Lower leg skin (tissue), 4 donors: ENCODE measurements at regions of chr7 and their contacts with region 1.

Region 1: DNA sequence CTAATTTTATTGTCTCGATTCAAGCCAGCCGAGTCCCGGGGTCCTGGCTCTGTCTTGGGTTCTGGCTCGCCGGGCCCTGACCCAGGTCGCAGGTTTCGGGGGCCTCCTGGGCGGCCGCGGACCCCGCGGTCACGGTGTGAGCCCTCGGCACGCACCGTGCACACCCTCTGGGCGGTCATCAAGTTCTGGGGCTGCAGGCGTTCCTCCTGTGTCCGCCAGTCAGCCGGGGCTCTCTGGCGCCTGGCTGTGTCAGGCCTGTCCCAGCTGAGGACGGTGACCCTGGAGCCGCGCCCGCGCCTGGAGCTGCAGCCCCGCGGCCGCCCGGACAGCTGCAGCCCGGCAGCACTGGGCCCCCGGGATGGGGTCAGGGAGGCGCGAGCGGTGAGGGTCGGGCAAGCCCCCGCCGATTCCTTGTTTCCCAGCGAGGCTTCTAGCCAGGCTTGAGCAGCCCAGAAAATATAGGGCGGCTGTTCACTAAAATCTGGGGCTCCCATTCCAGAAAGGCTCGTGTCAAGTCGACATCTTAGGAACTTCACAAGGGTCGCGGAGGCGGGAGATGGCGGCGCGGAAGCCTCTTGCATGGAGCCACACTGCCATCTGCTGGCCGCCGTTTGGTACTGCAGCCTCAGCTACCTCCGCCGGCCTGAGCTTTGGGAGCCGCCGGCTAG is 4.2 kb upstream of the HOXA7 start:
- DNase-seq: peak; percentile 90 to 99
- H3K4me3 ChIP-seq: peak overlapping the region; percentile 44
- CTCF ChIP-seq: peak in 2 of 3 donors; percentile 50 to 99
- POLR2A ChIP-seq: no peak

Region 2: GRCh38 chr7:25851332-25852210 is 1309.1 kb before region 1 on chr7:
- intact Hi-C with region 1: loop called (anchors 5 kb)
- DNase-seq: peak; percentile 86 to 96
- H3K4me3 ChIP-seq: no peak overlapping the region
- CTCF ChIP-seq: peak in 1 of 3 donors; percentile 61
- POLR2A ChIP-seq: no peak

Region 3: GRCh38 chr7:26200444-26201246 is 960.0 kb before region 1 on chr7 and contains the start of gene HNRNPA2B1:
- intact Hi-C with region 1: loop called (anchors 10 kb)
- DNase-seq: peak; percentile 98 to 99
- H3K4me3 ChIP-seq: peak within 1 kb of the TSS; percentile 95
- CTCF ChIP-seq: no peak
- POLR2A ChIP-seq: peak in 1 of 2 donors; percentile 100
- total RNA-seq, gene HNRNPA2B1: 78.1 to 133 (median 99.4) TPM

Region 4: DNA sequence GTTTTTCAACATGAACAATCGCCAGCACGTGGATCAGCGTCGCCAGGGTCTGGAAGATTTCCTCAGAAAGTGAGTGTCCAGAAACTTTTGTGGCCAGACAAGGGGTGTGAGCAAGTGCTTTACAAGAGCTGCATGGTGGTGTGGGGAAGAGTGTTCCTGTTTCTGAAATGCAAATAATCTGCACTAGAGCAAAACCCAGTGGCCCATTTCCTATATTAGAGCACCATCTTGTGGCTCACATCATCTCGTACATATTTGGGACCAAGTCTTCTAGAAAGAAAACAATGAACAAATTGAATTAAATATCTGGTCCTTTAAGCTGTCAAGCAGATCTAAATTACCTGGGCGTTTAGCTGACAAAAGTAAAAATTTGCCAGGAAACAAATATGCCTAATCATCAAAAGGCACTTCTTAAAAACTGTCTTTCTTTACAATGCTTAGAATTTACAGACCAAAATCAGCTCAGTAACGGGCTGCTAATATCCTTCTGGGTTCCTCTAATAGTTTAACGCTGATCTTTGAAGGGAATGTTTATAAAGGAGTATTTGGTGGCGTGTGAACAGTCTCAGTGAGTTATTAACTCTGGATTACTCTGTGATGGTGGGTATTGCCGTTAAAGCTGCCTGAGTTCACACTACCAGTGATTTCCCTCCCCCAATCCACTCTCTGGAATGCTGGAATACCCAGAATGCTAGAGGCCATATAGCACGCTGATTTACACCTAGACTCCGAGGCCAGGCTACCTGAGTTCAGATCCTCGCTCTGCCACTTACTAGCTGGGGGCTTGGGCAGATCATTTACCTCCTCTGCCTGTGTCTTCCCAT is 795.4 kb before region 1 on chr7:
- intact Hi-C with region 1: loop called (anchors 5 kb)
- DNase-seq: peak in 1 of 2 donors; percentile 68
- H3K4me3 ChIP-seq: no peak overlapping the region
- CTCF ChIP-seq: peak in 1 of 3 donors; percentile 51
- POLR2A ChIP-seq: no peak

Region 5: DNA sequence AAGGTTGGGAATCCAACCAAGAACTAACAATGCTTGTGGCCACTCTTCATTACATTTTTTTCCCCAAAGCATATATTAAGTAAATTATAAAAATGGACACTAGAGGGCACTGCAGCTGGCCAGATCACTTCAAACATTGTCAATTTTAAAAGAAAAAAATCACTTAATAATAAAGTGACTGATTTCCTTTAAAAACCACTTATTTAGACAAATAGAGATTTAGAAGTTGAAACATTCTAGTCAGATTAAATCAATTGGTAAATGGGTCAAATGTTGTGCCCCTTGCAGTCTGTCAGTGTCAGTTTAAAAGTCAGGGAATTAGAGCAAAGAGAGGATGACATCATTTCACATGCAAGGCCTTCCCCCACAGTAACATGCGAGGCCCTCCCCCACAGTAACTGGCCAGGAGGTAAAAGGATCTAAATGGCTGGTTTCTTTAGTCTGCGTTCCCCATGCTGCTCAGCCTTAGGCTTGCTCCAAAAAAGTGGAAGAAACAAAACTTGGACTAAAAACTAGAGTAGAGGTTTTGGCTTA is 474.2 kb before region 1 on chr7:
- intact Hi-C with region 1: no loop called
- DNase-seq: no peak
- H3K4me3 ChIP-seq: no peak overlapping the region
- CTCF ChIP-seq: peak in 1 of 3 donors; percentile 37
- POLR2A ChIP-seq: no peak

Region 6: DNA sequence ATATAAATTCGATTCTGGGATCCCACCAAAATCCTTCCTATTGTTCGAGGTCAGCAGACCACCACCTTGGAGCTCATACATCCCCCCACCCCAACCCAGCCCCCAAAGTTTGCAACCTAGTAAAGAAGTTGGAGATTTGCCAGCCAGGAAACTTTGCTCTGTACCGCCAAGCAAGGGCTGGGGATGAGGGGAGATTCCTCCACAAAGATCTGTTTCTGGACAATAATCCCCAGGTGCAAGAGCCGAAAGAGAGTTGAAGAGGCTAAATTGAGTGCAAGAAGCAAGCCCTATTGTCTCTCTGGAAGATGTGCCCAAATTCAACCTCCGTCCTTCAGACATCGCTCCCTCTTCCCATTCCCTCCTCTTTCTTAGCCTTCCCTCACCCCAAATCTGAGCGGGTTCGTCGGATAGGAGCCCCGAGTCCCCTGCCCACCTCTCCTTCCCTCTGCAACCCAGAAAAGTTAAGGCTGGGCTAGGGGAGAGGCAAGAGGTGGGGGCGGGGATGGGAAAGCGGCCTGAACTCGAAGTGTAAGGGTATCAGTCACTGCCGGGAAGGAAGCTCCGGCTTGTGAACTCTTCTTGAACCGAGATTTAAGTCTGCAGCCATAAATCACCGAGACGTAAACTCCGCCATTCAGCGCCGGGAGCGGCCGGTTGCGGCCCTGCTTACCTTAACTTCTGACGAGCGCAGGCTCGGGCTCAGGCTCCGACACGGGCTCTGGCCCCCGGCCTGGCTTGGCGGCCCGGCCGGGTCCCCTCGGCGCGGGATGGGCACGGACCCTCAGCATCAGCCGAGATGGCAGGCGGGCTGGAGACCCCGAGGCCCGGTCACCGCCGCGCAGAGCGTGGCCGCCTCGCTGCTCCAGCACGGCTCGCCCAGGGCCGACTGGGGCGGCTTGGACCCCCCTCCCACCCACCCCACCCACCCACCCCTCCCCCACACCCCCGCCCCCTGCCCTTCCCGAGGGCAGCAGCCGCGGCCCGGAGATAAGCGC is 47.4 kb before region 1 on chr7:
- intact Hi-C with region 1: no loop called
- DNase-seq: no peak
- H3K4me3 ChIP-seq: no peak overlapping the region
- CTCF ChIP-seq: no peak
- POLR2A ChIP-seq: no peak

Region 7: GRCh38 chr7:27134392-27134791 is 26.3 kb before region 1 on chr7:
- intact Hi-C with region 1: no loop called
- DNase-seq: peak in 1 of 2 donors; percentile 68
- H3K4me3 ChIP-seq: no peak overlapping the region
- CTCF ChIP-seq: no peak
- POLR2A ChIP-seq: no peak